ENCODE measurements at regions of chr15 and their contacts with region 1.

Region 1: GRCh38 chr15:92650256-92650655 is 5.3 kb downstream of the FAM174B start:
- DNase-seq: no peak
- ATAC-seq: no peak
- H3K4me3 Mint-ChIP-seq: no peak overlapping the region
- H3K27ac Mint-ChIP-seq: no peak overlapping the region
- H3K4me1 Mint-ChIP-seq: peaks cover 3% of the 10 kb centered on the region
- H3K27me3 Mint-ChIP-seq: peaks cover 14% of the 10 kb centered on the region

Region 2: DNA sequence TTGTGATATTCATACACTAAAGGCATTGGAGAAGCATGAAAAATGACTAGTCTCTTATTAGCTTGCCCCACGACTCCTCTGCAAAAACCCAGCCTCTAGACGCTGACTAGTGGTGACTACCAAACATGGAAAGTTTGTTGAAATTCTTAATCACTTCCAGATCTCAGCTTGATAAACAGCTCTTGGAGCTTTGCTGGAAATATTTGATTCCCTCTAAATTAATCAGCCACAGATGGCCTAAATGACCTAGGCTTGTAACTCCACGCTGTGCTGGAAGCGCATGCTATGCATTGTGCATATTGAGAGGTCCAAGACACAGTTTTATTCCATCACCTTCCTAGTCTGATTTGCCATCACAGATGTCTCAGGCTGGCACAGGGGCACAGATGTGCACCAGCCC is 501.2 kb before region 1 on chr15:
- CTCF ChIA-PET with region 1: no interaction called
- POLR2A ChIA-PET with region 1: no interaction called
- intact Hi-C with region 1: no loop called
- DNase-seq: no peak
- ATAC-seq: no peak
- H3K4me3 Mint-ChIP-seq: no peak overlapping the region
- H3K27ac Mint-ChIP-seq: no peak overlapping the region
- H3K4me1 Mint-ChIP-seq: no peaks in the 10 kb centered on the region
- H3K27me3 Mint-ChIP-seq: no peaks in the 10 kb centered on the region

Region 3: DNA sequence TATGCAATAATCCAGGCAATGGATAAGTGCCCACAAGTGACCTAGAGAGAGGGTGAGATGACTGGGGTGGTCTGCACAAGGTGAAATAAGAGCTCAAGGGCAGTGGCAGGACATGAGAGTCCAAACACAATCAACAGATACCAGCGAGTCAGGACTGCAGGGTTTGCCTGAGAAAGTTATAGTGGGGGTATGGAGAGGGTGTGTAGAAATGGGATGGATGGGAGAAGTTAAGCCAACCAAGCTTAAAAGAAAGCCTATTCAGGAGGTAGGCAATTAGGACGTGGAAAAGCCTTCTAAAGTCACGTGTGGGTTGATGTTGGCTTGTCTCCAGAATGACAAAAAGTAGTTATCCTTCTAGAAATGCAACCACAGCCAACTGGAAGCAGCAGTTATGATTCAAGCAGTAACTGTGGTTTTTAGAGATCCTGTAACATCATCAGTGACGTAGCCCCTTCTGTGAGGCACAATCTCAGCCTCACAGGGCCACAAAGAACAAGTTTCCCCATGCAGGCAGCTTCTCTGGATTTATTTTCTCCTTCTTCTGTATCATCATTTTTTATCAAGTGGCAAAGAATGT is 50.8 kb before region 1 on chr15:
- CTCF ChIA-PET with region 1: no interaction called
- POLR2A ChIA-PET with region 1: no interaction called
- intact Hi-C with region 1: no loop called
- DNase-seq: peak; percentile 17
- ATAC-seq: peak; percentile 78
- H3K4me3 Mint-ChIP-seq: no peak overlapping the region
- H3K27ac Mint-ChIP-seq: no peak overlapping the region
- H3K4me1 Mint-ChIP-seq: peaks cover 8% of the 10 kb centered on the region
- H3K27me3 Mint-ChIP-seq: peaks cover 9% of the 10 kb centered on the region

Region 4: DNA sequence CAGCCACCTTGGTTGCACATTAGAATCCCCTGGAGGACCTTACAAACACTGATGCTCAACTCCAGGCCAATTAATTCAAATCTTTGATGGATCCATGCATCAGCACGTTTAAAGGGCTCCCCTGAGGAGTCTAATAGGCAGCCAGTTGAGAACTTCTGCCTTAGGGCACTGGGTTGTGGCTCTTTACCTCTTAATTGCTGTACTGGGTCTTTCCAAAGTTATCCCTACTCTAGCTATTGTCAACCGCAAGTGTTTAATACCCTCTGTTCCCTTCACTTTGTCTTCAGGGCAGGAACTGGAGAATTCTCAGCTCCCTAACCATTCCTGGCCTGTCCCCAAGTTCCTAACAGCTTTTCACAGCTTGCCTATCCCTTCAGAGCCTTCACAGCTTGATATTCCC is 20.4 kb after region 1 on chr15:
- CTCF ChIA-PET with region 1: no interaction called
- POLR2A ChIA-PET with region 1: no interaction called
- intact Hi-C with region 1: loop called in 1 of 2 experiments (anchors 2 kb)
- DNase-seq: no peak
- ATAC-seq: no peak
- H3K4me3 Mint-ChIP-seq: no peak overlapping the region
- H3K27ac Mint-ChIP-seq: no peak overlapping the region
- H3K4me1 Mint-ChIP-seq: peaks cover under 1% of the 10 kb centered on the region
- H3K27me3 Mint-ChIP-seq: peaks cover 10% of the 10 kb centered on the region